Heart left ventricle (tissue), 16 donors: ENCODE measurements at regions of chr6 and their contacts with region 1.

Region 1: GRCh38 chr6:117317261-117317660 is 51.9 kb downstream of the VGLL2 start:
- DNase-seq: no peak
- ATAC-seq: no peak
- H3K4me3 ChIP-seq: no peak overlapping the region
- H3K27ac ChIP-seq: no peak overlapping the region
- H3K4me1 ChIP-seq: no peaks in the 10 kb centered on the region
- H3K27me3 ChIP-seq: no peaks in the 10 kb centered on the region
- CTCF ChIP-seq: peak in 11 of 12 donors; percentile 10 to 55 (median 41)
- POLR2A ChIP-seq: no peak

Region 2: DNA sequence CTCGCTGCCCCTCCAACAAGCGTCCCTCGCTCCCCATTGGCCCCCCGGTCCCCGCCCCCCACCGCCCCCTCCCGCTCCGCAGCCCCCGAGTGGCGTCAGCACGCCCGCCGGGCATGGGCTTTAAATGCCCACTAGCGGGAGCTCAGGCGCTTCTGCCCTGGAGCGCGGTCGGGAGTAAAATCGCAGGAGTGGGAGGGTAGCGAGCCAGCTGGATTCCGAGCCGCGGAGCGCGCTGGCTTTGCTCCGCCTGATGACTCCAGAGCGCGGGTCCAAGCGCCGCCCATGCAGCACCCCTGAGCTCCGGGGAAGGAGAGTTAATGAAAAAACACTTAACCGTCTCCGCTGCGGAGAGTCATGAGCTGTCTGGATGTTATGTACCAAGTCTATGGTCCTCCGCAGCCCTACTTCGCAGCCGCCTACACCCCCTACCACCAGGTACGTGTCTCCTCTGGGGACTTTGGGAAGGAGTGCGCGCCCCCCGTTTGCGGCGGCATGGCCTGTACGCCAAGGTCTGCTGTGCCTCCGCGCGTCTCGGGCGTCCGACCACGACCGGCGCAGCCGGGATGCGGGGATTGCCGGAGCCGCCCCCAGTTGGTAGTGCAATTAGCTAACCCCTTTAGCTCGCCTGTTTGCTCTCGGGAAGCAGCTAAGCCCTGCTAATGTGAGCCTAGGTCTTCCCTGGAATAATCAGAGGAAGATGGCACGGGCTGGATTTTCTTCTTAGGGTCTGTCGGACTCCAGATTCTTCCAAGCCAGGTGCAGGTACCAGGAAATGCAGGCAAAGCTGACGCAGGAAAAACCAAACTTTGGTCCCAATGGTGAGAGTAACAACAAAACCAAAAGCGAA is 51.6 kb before region 1 on chr6 and contains the start of gene VGLL2:
- intact Hi-C with region 1: no loop called
- DNase-seq: peak in 4 of 5 donors; percentile 31 to 69 (median 44)
- ATAC-seq: peak in 3 of 4 donors; percentile 81 to 89 (median 82)
- H3K4me3 ChIP-seq: peak within 1 kb of the TSS; percentile 16 to 54 (median 41)
- H3K27ac ChIP-seq: peak within 1 kb of the TSS in 1 of 12 donors; percentile 19
- H3K4me1 ChIP-seq: peaks cover 0 to 31% (median 18%) of the 10 kb centered on the region in 12 donors
- H3K27me3 ChIP-seq: peaks cover 58 to 100% (median 89%) of the 10 kb centered on the region in 9 donors
- CTCF ChIP-seq: peak in 2 of 12 donors; percentile 16 to 31
- POLR2A ChIP-seq: no peak
- total RNA-seq, gene VGLL2: 0.20 to 29.3 (median 0.54) TPM in 6 of 9 donors, not detected in the others

Region 3: DNA sequence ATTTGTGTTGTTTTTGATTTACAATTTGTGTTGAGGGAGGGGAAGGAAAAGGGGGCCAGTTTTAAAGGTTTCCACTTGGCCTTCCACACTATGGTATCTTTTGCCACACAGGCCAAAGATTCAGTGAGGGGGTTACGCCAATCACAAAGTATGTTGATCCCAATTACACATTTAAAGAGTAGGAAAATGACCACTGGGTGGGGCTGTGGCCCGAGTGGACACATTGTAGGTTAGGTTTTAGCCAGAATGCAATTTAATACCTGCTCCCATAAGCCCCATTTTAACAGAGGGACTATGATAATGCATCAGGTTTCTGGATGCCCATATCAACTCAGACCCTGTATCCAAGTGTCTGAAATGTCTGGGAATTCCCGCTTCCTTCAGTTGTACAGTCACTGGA is 36.3 kb before region 1 on chr6:
- intact Hi-C with region 1: loop called in 1 of 10 experiments (anchors 5 kb)
- DNase-seq: no peak
- ATAC-seq: no peak
- H3K4me3 ChIP-seq: no peak overlapping the region
- H3K27ac ChIP-seq: no peak overlapping the region
- H3K4me1 ChIP-seq: no peaks in the 10 kb centered on the region
- H3K27me3 ChIP-seq: peaks cover 0 to 28% (median 12%) of the 10 kb centered on the region in 9 donors
- CTCF ChIP-seq: peak in 5 of 12 donors; percentile 16 to 37 (median 30)
- POLR2A ChIP-seq: no peak

Region 4: GRCh38 chr6:117373211-117373813 is 56.1 kb after region 1 on chr6:
- intact Hi-C with region 1: no loop called
- DNase-seq: peak in 1 of 5 donors; percentile 60
- ATAC-seq: no peak
- H3K4me3 ChIP-seq: no peak overlapping the region
- H3K27ac ChIP-seq: no peak overlapping the region
- H3K4me1 ChIP-seq: no peaks in the 10 kb centered on the region
- H3K27me3 ChIP-seq: no peaks in the 10 kb centered on the region
- CTCF ChIP-seq: no peak
- POLR2A ChIP-seq: no peak